Vagina (tissue), 2 donors: ENCODE measurements at regions of chr1 and their contacts with region 1.

Region 1: GRCh38 chr1:205977402-205978014 is 25.7 kb downstream of the RAB7B start:
- DNase-seq: no peak
- H3K4me3 ChIP-seq: no peak overlapping the region
- H3K27ac ChIP-seq: no peak overlapping the region
- H3K4me1 ChIP-seq: peaks cover 19% of the 10 kb centered on the region
- H3K27me3 ChIP-seq: no peaks in the 10 kb centered on the region
- CTCF ChIP-seq: peak; percentile 93 to 98 (median 96)
- POLR2A ChIP-seq: no peak

Region 2: DNA sequence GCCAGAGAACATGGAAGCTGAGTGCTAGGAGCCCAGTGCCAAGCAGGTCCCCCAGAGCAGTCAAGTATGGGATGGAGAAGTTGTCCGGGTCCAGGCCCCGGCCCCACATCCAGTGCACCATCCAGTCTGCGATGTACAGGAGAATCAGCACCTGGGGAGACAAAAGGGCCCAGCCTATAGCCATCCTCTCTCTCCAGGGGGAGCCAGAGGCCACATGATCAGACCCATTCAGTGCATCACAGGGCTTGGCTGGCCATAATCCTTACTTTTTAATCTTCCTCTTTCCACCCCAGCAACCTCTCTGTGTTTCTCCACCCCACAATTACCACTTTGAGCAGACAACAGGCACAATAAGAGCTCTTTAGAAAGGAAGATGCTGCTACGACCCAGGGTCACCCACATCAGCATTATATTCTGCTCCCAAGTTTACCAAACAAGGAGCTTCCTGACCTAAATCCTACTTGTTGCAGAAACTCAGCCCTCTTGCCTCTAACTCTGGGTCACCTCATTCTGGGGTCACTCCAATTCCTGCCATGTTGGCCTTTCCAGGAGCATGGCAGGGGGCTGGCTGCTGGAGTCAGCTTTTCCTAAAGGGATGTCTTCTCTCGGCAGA is 185.8 kb before region 1 on chr1:
- intact Hi-C with region 1: loop called (anchors 10 kb)
- DNase-seq: no peak
- H3K4me3 ChIP-seq: no peak overlapping the region
- H3K27ac ChIP-seq: no peak overlapping the region
- H3K4me1 ChIP-seq: no peaks in the 10 kb centered on the region
- H3K27me3 ChIP-seq: no peaks in the 10 kb centered on the region
- CTCF ChIP-seq: peak; percentile 58 to 66 (median 62)
- POLR2A ChIP-seq: no peak

Region 3: GRCh38 chr1:205919026-205919746 is 58.3 kb before region 1 on chr1:
- intact Hi-C with region 1: loop called (anchors 1 kb)
- DNase-seq: no peak
- H3K4me3 ChIP-seq: no peak overlapping the region
- H3K27ac ChIP-seq: no peak overlapping the region
- H3K4me1 ChIP-seq: no peaks in the 10 kb centered on the region
- H3K27me3 ChIP-seq: no peaks in the 10 kb centered on the region
- CTCF ChIP-seq: peak; percentile 71 to 92 (median 76)
- POLR2A ChIP-seq: no peak